Prostate gland (tissue), 2 donors: ENCODE measurements at regions of chr14 and their contacts with region 1.

Region 1: DNA sequence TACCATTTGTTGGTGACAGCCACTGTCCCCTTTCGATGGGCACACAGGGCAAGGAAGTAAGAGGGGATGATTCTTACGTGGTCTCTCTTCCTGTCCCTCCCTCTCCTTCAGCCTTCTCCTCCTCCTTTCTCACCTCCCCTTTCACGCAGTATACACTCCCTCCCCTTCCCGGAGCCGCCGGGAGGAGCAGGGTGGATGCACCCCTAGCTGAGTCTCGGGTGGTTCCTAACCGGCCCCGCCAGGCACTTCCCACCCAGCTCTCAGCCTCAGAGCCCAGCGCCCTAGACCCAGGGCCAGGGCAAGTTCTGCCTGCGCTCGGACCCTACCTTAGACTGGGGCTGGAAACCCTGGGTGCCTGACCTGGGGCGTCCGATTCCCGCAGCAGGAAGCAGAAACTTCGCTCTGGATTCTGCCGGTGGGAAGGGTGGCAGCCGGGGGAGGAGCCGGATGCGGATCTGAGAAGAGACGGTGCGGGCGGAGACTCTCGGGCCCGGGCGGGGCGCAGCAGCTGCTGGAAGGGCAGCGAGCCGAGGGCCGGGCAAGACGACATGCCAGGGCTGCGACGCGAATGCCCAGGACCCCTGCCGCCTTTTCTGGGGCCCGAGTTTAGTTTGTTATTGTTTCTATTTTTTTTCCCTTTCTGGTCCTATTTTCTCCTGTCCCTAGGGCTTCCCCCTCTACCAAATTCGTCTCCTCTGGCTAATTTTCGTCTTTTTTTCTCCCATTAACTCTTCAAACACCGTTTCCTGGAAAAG is at the start of gene TEP1:
- DNase-seq: peak; percentile 88
- H3K4me3 ChIP-seq: peak within 1 kb of the TSS; percentile 81 to 84
- H3K27ac ChIP-seq: peak within 1 kb of the TSS; percentile 97 to 99
- H3K4me1 ChIP-seq: no peaks in the 10 kb centered on the region
- H3K27me3 ChIP-seq: no peaks in the 10 kb centered on the region
- CTCF ChIP-seq: peak in 1 of 4 experiments; percentile 7
- POLR2A ChIP-seq: peak; percentile 75
- total RNA-seq, gene TEP1: 25.8 to 31.0 TPM

Region 2: DNA sequence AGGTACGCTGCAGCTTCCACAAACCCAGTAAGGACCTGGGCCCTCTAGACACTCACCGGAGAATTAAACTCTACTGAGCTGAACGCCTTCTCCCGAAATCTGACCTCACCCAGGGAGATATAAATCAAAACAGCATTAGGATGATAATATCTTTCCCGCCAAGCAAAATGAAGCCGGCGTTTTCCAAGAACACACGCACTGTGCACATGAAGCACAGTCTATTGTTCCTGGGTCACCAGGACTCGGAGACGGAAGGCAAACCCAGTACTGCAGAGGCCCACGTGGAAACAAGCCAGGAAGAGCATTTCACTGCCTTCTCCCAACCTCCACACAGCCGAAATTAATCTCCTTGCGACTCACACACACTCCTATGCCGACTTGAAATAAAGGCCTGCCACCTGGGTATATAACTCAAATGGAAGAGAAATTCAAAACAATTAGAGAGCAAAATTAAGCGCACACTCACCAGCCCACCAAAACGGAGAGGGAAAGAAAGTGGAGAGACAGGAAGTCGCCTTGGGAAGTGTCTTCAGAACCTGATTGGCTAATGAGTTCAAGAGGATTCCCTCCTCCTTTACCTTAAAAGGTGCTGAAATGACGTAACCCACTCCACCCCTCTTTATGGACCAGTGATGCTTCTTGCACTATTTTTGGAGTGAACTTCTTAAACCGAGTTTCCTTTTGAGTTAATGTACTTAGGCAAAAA is 80.3 kb before region 1 on chr14 and contains the start of gene CCNB1IP1:
- intact Hi-C with region 1: loop called (anchors 5 kb)
- DNase-seq: peak; percentile 77
- H3K4me3 ChIP-seq: peak within 1 kb of the TSS; percentile 35 to 48
- H3K27ac ChIP-seq: peak within 1 kb of the TSS; percentile 75 to 83
- H3K4me1 ChIP-seq: no peaks in the 10 kb centered on the region
- H3K27me3 ChIP-seq: no peaks in the 10 kb centered on the region
- CTCF ChIP-seq: no peak
- POLR2A ChIP-seq: peak; percentile 33
- total RNA-seq, gene CCNB1IP1: 34.6 to 47.8 TPM

Region 3: DNA sequence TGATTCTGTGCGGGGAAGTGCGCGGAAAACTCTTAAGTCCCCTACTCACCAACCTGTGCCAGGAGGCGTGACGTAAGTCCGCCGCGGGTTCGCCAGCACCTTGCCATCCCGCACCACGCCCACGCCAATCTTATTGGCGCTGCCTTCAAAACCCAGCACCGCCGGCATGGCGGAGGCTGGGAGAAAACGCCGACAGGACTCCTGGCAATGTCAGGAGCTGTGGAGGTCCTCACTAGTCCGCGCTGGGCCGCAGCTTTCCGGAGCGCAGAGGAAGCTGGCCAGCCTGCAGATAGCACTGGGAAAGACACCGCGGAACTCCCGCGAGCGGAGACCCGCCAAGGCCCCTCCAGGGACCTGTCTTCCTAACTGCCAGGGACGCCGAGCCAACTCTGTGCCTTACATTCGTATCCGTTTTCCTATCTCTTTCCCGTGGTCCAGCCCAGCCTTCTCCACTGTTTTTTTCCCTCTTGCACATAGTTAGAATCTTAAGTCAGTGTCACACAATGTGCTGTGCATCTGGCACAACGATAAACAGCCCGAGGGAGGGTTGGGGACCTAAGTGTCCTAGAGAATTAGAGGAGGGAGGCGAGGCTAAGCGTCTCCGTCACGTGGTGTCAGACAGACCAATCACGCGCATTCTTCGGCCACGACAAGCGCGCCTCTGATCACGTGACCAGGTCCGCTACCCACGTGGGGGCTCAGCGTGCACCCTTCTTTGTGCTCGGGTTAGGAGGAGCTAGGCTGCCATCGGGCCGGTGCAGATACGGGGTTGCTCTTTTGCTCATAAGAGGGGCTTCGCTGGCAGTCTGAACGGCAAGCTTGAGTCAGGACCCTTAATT is 41.5 kb after region 1 on chr14 and contains the starts of genes APEX1 and OSGEP:
- intact Hi-C with region 1: loop called (anchors 1 kb)
- DNase-seq: peak; percentile 99
- H3K4me3 ChIP-seq: peak within 1 kb of the TSS; percentile 72 to 85
- H3K27ac ChIP-seq: peak within 1 kb of the TSS; percentile 95 to 97
- H3K4me1 ChIP-seq: no peaks in the 10 kb centered on the region
- H3K27me3 ChIP-seq: no peaks in the 10 kb centered on the region
- CTCF ChIP-seq: peak in 2 of 4 experiments; percentile 15 to 25
- POLR2A ChIP-seq: peak; percentile 65
- total RNA-seq, gene APEX1: 113 to 178 TPM
- total RNA-seq, gene OSGEP: 54.2 to 71.7 TPM

Region 4: DNA sequence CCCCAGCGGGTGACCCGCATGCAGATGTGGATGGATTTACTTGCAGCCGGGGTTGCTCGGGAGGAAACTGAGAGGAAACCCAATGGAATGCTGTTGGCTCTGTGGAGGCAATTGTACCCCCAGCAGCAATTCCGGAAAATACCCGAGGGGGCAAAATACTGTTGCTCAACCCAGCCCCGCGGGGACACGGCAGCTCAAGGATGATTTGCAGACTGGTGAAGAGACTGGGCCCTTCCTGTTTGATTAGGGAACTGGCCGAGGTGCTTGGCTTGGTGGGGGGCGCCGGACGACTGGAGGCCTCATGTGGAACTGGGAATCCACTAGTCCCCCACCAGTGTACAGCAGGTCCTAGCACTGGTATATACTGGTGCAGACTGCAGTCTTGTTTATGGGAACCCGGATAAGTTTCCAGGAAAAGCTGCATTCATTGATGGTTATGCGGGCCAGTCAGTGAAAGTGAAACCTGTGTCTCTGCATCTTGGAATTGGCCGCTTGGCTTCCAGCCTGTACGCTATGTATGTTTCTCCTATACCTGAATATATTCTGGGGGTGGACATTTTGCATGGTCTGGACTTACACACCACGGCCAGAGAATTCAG is 188.4 kb after region 1 on chr14:
- intact Hi-C with region 1: no loop called
- DNase-seq: no peak
- H3K4me3 ChIP-seq: no peak overlapping the region
- H3K27ac ChIP-seq: no peak overlapping the region
- H3K4me1 ChIP-seq: no peaks in the 10 kb centered on the region
- H3K27me3 ChIP-seq: no peaks in the 10 kb centered on the region
- CTCF ChIP-seq: no peak
- POLR2A ChIP-seq: no peak